AG04450 (cell line): ENCODE measurements at regions of chr10 and their contacts with region 1.

Region 1: DNA sequence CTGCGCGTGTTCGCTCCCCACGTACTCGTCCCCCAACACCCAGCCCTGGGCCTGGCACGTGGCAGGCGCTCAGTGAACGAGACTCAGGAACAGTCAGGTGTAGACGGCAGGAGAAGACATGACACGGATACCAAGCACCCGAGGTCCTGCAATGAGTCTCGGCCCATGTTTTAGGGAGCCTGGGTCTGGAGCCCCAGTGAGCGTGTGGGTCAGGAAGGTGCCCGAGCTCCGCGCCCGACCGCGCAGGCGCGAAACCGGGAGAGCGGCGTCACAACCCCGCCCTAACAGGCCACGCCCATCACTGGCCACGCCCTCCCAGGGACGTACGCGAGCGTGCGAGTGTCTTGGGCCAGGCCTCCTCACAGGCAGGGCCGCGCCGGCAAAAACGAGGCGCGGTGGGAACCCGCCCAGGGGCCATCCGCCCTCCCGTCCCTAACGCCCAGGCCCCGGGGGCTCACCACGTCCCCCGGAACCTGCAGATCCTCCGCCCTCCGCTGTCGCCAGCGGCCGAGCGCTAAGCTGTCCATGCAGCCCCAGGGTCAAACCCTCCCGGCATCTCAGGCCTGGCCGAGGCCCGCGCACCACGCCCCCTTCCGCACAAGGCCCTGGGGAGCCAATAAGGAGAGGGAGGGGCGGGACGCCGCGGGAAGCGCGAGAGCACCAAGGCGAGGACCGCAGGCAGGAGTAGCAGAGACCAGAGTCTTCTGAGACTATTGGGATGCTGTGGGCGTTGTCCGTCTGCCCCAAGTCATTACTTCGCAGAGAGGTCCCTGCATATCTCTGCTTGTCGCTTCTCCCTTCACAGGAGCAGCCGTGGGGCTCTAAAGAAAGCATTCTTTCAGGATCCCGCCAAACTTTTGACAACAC is at the start of gene C10orf143:
- DNase-seq: peak; percentile 94
- H3K4me3 ChIP-seq: peak within 1 kb of the TSS; percentile 97
- H3K27ac ChIP-seq: peak within 1 kb of the TSS; percentile 89
- H3K27me3 ChIP-seq: no peaks in the 10 kb centered on the region
- CTCF ChIP-seq: no peak
- polyA plus RNA-seq, gene C10orf143: 1.7 and 1.9 TPM in 2 replicates

Region 2: DNA sequence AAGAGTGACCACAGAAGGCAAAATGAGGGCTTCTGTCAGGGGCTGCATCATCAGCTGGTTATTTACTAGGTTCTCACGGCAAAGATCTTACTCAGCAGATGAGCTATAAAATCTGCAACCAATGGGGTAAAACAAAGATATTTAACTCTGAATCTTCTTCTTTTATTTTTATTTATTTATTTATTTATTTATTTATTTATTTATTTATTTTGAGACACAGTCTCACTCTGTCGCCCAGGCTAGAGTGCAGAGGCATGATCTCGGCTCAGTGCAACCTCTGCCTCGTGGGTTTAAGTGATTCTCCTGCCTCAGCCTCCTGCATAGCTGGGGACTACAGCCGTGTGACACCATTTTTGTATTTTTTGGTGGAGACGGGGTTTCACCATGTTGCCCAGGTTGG is 11.1 kb before region 1 on chr10:
- CTCF ChIA-PET with region 1: interaction called, 15 read pairs
- POLR2A ChIA-PET with region 1: no interaction called
- DNase-seq: no peak
- H3K4me3 ChIP-seq: no peak overlapping the region
- H3K27ac ChIP-seq: no peak overlapping the region
- H3K27me3 ChIP-seq: no peaks in the 10 kb centered on the region
- CTCF ChIP-seq: no peak

Region 3: GRCh38 chr10:130127364-130128061 is 17.0 kb after region 1 on chr10:
- CTCF ChIA-PET with region 1: interaction called, 59 read pairs
- POLR2A ChIA-PET with region 1: interaction called, 11 read pairs
- DNase-seq: peak; percentile 33
- H3K4me3 ChIP-seq: no peak overlapping the region
- H3K27ac ChIP-seq: peak overlapping the region; percentile 11
- H3K27me3 ChIP-seq: peaks cover 14% of the 10 kb centered on the region
- CTCF ChIP-seq: peak; percentile 98

Region 4: DNA sequence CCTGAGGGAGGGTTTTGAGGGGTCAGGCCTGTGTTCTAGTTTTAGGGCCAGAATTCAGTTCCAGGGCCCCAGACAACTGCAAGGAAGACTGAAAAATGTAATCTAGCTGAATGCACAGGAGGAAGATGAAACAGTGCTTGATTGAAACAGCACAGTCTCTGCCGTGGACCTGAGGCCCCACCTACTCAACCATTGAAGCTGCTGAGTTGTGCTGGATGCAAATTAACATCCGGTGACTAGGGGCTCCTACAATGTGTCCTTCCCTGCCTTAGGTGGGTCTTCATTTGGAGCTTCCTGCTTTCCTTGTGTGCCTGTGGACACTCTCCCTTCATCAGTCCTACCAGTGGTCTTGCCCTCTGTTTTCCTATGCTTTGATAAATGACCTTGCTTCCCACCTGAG is 31.4 kb after region 1 on chr10:
- CTCF ChIA-PET with region 1: interaction called, 45 read pairs
- POLR2A ChIA-PET with region 1: interaction called, 93 read pairs
- DNase-seq: no peak
- H3K4me3 ChIP-seq: no peak overlapping the region
- H3K27ac ChIP-seq: no peak overlapping the region
- H3K27me3 ChIP-seq: no peaks in the 10 kb centered on the region
- CTCF ChIP-seq: no peak

Region 5: GRCh38 chr10:130179640-130180039 is 69.2 kb after region 1 on chr10:
- CTCF ChIA-PET with region 1: interaction called, 18 read pairs
- POLR2A ChIA-PET with region 1: interaction called, 5 read pairs
- DNase-seq: peak; percentile 24
- H3K4me3 ChIP-seq: no peak overlapping the region
- H3K27ac ChIP-seq: no peak overlapping the region
- H3K27me3 ChIP-seq: no peaks in the 10 kb centered on the region
- CTCF ChIP-seq: peak; percentile 62